Heart right ventricle (tissue), 16 donors: ENCODE measurements at regions of chr3 and their contacts with region 1.

Region 1: GRCh38 chr3:163768048-163768447 is 1310.2 kb downstream of the SI start:
- DNase-seq: no peak
- ATAC-seq: no peak
- H3K4me3 ChIP-seq: no peak overlapping the region
- H3K27ac ChIP-seq: no peak overlapping the region
- H3K4me1 ChIP-seq: no peaks in the 10 kb centered on the region
- H3K27me3 ChIP-seq: no peaks in the 10 kb centered on the region
- CTCF ChIP-seq: no peak

Region 2: DNA sequence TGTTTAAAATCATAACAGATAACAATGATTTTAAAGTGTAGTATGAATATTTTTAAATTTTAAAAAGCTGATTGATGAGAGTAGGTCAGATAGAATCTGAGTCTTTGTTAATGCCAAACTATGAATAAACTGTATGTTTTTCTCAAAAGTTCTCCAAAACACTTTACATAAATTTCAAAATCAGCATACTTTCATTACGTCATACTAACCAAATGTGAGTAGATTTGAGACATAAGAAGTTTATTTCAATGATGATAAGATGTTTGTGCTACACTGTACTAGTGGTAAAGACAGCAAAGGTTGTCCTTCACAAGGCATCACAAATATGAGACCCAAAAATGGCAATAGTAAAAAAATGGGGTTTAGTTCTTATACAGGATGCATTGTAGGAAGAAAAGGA is 32.7 kb before region 1 on chr3:
- intact Hi-C with region 1: no loop called
- DNase-seq: no peak
- ATAC-seq: no peak
- H3K4me3 ChIP-seq: no peak overlapping the region
- H3K27ac ChIP-seq: no peak overlapping the region
- H3K4me1 ChIP-seq: no peaks in the 10 kb centered on the region
- H3K27me3 ChIP-seq: no peaks in the 10 kb centered on the region
- CTCF ChIP-seq: no peak

Region 3: GRCh38 chr3:163785693-163786092 is 17.6 kb after region 1 on chr3:
- intact Hi-C with region 1: loop called in 1 of 10 experiments (anchors 1 kb)
- DNase-seq: no peak
- ATAC-seq: no peak
- H3K4me3 ChIP-seq: no peak overlapping the region
- H3K27ac ChIP-seq: no peak overlapping the region
- H3K4me1 ChIP-seq: no peaks in the 10 kb centered on the region
- H3K27me3 ChIP-seq: no peaks in the 10 kb centered on the region
- CTCF ChIP-seq: no peak